ENCODE measurements at regions of chr21 and their contacts with region 1.

Region 1: GRCh38 chr21:16370186-16370585 is 640.4 kb downstream of the USP25 start:
- DNase-seq: no peak
- H3K4me3 ChIP-seq: no peak overlapping the region
- H3K27ac ChIP-seq: no peak overlapping the region
- H3K4me1 ChIP-seq: no peaks in the 10 kb centered on the region
- H3K27me3 ChIP-seq: no peaks in the 10 kb centered on the region
- CTCF ChIP-seq: no peak
- EP300 ChIP-seq: no peak
- POLR2A ChIP-seq: no peak

Region 2: DNA sequence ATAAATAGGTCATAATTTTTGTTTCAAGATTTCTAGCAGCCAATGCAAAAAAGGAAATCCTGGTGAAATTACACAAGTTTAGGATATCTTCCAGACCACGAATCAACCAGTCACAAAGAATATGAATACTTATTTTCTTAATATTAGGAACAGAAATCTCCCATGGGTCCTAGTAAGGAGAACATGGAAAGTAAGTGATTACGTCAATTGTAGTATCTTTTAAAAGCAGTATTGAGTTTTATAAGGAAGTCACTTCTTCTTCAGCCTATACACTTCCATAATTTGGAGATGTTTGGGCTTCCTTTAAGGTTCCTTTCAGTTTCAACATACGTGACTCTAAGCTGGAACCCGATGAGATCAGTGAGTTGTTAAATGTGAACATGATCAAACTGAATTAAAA is 105.9 kb before region 1 on chr21:
- in situ Hi-C with region 1: loop called in 1 of 4 experiments (anchors 25 kb)
- intact Hi-C with region 1: no loop called
- DNase-seq: no peak
- H3K4me3 ChIP-seq: no peak overlapping the region
- H3K27ac ChIP-seq: no peak overlapping the region
- H3K4me1 ChIP-seq: no peaks in the 10 kb centered on the region
- H3K27me3 ChIP-seq: no peaks in the 10 kb centered on the region
- CTCF ChIP-seq: no peak
- EP300 ChIP-seq: no peak
- POLR2A ChIP-seq: no peak

Region 3: DNA sequence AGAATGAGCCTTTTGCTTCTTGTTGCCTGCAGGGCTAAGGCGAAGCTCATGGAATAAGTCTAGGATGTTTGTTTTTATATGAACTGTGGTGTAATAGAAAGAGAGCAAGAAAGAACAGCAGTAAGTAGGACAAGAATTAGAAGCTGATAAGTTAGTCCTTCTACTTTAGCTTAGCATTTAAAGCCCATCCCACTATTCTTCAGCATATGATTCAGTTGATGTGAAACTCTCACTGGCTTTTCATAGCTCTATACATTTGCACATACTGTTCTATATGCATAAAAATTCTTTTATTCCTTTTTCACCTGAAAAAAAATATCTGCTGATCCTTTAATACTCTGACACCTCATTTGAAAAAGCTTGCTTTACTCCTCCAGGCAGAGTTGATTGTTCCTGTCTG is 71.6 kb after region 1 on chr21:
- in situ Hi-C with region 1: no loop called
- intact Hi-C with region 1: no loop called
- DNase-seq: no peak
- H3K4me3 ChIP-seq: no peak overlapping the region
- H3K27ac ChIP-seq: no peak overlapping the region
- H3K4me1 ChIP-seq: no peaks in the 10 kb centered on the region
- H3K27me3 ChIP-seq: no peaks in the 10 kb centered on the region
- CTCF ChIP-seq: no peak
- EP300 ChIP-seq: no peak
- POLR2A ChIP-seq: no peak

Region 4: DNA sequence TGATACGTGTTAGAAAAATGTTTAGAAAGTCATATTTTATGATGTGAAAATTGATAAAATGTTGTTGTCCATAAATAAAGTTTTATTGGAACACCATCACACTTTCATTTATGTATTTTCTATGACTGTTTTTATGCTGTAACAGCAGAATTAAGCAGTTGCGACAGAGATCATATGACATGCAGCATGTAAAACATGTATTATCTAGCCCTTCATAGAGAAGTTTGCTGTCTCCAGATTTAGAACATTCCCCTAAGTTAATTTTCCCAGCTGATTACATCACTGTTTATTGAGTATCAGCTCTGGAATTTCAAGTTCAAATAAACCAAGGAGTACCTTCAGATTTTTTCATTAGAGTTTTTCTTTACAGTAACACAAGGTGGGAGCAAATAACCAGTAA is 152.3 kb after region 1 on chr21:
- in situ Hi-C with region 1: no loop called
- intact Hi-C with region 1: no loop called
- DNase-seq: no peak
- H3K4me3 ChIP-seq: no peak overlapping the region
- H3K27ac ChIP-seq: no peak overlapping the region
- H3K4me1 ChIP-seq: no peaks in the 10 kb centered on the region
- H3K27me3 ChIP-seq: no peaks in the 10 kb centered on the region
- CTCF ChIP-seq: no peak
- EP300 ChIP-seq: no peak
- POLR2A ChIP-seq: no peak

Region 5: DNA sequence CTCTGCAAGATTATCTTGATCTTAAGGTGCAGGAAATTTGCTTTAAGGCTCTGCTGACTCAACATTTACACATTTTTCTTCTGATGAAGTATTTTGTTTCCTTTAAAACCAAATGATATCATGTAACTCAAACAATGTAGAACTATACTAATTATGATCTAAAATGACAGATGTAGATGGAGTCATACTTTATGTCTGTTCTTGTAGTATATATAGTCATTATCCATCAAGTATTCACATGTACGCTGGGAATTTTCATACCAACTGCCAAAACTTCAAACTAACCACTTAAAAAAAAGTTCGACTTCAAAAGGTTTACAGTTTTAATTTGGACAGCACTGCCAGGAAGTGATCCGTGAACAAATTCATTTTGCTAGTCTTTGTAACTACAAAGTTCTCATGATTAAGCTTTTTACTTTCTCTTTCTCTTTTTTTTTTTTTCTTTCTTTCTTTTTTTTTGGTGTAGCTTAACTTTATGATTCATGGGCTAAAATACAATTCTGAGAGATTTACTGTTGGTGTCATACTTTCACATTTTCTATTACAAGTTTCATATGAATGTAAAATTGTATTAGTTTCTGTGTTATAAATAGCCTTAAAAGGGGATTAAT is 633.7 kb after region 1 on chr21:
- in situ Hi-C with region 1: no loop called
- intact Hi-C with region 1: no loop called
- DNase-seq: no peak
- H3K4me3 ChIP-seq: no peak overlapping the region
- H3K27ac ChIP-seq: no peak overlapping the region
- H3K4me1 ChIP-seq: peaks cover 0 to 4% (median 0%) of the 10 kb centered on the region in 4 donors
- H3K27me3 ChIP-seq: no peaks in the 10 kb centered on the region
- CTCF ChIP-seq: no peak
- EP300 ChIP-seq: no peak
- POLR2A ChIP-seq: no peak

Measured in transverse colon (tissue), 4 donors.